A673 (cell line): ENCODE measurements at regions of chr6 and their contacts with region 1.

Region 1: GRCh38 chr6:83615025-83615999 is 93.6 kb downstream of the SNAP91 start:
- DNase-seq: peak; percentile 67
- H3K4me3 ChIP-seq: no peak overlapping the region
- H3K27ac ChIP-seq: no peak overlapping the region
- H3K4me1 ChIP-seq: no peaks in the 10 kb centered on the region
- H3K27me3 ChIP-seq: peaks cover 2% of the 10 kb centered on the region
- CTCF ChIP-seq: peak; percentile 76

Region 2: GRCh38 chr6:83221889-83222479 is 393.3 kb before region 1 on chr6:
- CTCF ChIA-PET with region 1: no interaction called
- POLR2A ChIA-PET with region 1: no interaction called
- intact Hi-C with region 1: loop called (anchors 2 kb)
- DNase-seq: peak; percentile 82
- H3K4me3 ChIP-seq: no peak overlapping the region
- H3K27ac ChIP-seq: peak overlapping the region; percentile 70
- H3K4me1 ChIP-seq: peaks cover 39% of the 10 kb centered on the region
- H3K27me3 ChIP-seq: no peaks in the 10 kb centered on the region
- CTCF ChIP-seq: peak; percentile 72

Region 3: GRCh38 chr6:83804886-83805285 is 189.6 kb after region 1 on chr6:
- CTCF ChIA-PET with region 1: interaction called, 4 read pairs
- POLR2A ChIA-PET with region 1: no interaction called
- intact Hi-C with region 1: loop called (anchors 2 kb)
- DNase-seq: no peak
- H3K4me3 ChIP-seq: no peak overlapping the region
- H3K27ac ChIP-seq: no peak overlapping the region
- H3K4me1 ChIP-seq: no peaks in the 10 kb centered on the region
- H3K27me3 ChIP-seq: no peaks in the 10 kb centered on the region
- CTCF ChIP-seq: peak; percentile 43; the same call in 1 of the 2 replicates

Region 4: DNA sequence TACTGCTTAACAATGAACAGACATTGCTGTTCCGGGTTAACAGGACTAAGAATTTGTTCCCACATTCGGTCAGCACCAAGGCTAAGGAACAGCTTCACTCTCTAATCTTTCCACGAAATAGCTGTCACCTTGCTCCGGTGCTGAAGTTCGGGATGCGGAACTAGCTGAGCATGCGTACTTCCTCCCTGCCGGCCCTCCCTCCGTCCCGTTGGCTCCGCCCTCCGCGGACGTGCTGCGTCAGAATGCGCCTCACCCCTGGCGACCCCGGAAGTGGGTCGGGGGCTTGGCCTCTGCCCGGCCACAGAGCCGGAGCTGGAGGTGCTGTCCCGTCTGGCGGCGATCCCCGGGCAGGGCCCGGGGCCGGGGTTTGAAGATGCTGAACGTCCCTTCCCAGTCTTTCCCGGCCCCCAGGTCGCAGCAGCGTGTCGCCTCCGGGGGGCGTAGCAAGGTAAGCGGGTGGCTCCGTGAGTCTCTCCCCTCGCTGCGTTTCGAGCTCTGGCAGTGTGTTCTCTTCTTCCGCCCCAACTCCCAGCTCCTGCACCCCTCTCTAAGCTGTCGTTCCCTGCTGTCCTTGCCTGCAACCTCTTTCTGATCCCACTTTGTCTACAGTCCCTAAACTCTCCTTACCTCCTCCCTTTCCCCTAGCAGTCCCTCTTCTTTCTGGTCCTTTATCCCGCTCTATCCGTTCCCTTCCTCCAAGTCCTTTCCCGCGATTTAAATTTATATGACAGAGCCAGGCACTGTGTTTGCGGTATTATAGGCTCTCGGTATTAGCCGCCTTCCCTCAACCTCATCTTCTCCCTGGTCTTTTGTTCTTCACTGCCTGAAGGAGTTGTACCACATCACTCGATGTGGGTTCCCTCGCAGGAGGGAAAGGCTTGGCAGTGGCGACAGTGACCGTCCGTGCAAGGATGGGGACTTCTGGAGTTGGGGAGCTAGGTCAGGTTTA is 244.4 kb after region 1 on chr6 and contains the start of gene CYB5R4:
- CTCF ChIA-PET with region 1: interaction called, 3 read pairs
- POLR2A ChIA-PET with region 1: no interaction called
- intact Hi-C with region 1: loop called (anchors 10 kb)
- DNase-seq: peak; percentile 95
- H3K4me3 ChIP-seq: peak within 1 kb of the TSS; percentile 80
- H3K27ac ChIP-seq: peak within 1 kb of the TSS; percentile 67
- H3K4me1 ChIP-seq: peaks cover 12% of the 10 kb centered on the region
- H3K27me3 ChIP-seq: peaks cover 4% of the 10 kb centered on the region
- CTCF ChIP-seq: peak; percentile 73
- total RNA-seq, gene CYB5R4: 23.8 and 26.2 TPM in 2 replicates

Region 5: GRCh38 chr6:84177241-84177640 is 561.9 kb after region 1 on chr6:
- CTCF ChIA-PET with region 1: no interaction called
- POLR2A ChIA-PET with region 1: no interaction called
- intact Hi-C with region 1: no loop called
- DNase-seq: peak; percentile 30
- H3K4me3 ChIP-seq: no peak overlapping the region
- H3K27ac ChIP-seq: no peak overlapping the region
- H3K4me1 ChIP-seq: no peaks in the 10 kb centered on the region
- H3K27me3 ChIP-seq: no peaks in the 10 kb centered on the region
- CTCF ChIP-seq: no peak

Region 6: GRCh38 chr6:84220809-84221409 is 605.6 kb after region 1 on chr6:
- CTCF ChIA-PET with region 1: no interaction called
- POLR2A ChIA-PET with region 1: no interaction called
- intact Hi-C with region 1: loop called (anchors 5 kb)
- DNase-seq: peak; percentile 34
- H3K4me3 ChIP-seq: no peak overlapping the region
- H3K27ac ChIP-seq: no peak overlapping the region
- H3K4me1 ChIP-seq: no peaks in the 10 kb centered on the region
- H3K27me3 ChIP-seq: no peaks in the 10 kb centered on the region
- CTCF ChIP-seq: peak; percentile 69

Region 7: DNA sequence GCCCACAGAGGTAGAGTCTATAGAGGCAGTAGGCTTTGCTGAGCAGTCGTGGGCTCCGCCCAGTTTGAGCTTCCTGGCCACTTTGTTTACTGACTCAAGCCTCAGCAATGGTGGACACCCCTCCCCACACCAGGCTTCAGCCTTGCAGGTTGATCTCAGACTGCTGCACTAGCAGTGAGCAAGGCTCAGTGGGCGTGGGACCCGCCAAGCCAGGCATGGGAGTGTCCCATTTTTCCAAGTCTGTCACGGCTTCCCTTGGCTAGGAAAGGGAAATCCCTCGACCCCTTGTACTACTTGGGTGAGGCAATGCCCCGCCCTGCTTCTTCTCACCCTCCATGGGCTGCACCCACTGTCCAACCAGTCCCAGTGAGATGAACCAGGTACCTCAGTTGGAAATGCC is 1699.3 kb after region 1 on chr6:
- CTCF ChIA-PET with region 1: no interaction called
- POLR2A ChIA-PET with region 1: no interaction called
- intact Hi-C with region 1: loop called (anchors 10 kb)
- DNase-seq: no peak
- H3K4me3 ChIP-seq: no peak overlapping the region
- H3K27ac ChIP-seq: no peak overlapping the region
- H3K4me1 ChIP-seq: no peaks in the 10 kb centered on the region
- H3K27me3 ChIP-seq: peaks cover 2% of the 10 kb centered on the region
- CTCF ChIP-seq: no peak